Dendritic cell treated with granulocyte-macrophage colony-stimulating factor and Interleukin-4, amounts not matched to agents 40 ng/mL and 50 ng/mL, for 4 days (primary cell): ENCODE measurements at regions of chr1 and their contacts with region 1.

Region 1: GRCh38 chr1:70896224-70896623 is 151.4 kb downstream of the PTGER3 start:
- H3K4me3 Mint-ChIP-seq: no peak overlapping the region
- H3K27ac Mint-ChIP-seq: no peak overlapping the region
- H3K4me1 Mint-ChIP-seq: peaks cover 35% of the 10 kb centered on the region
- H3K27me3 Mint-ChIP-seq: no peaks in the 10 kb centered on the region

Region 2: GRCh38 chr1:70874111-70874510 is 22.1 kb before region 1 on chr1:
- intact Hi-C with region 1: loop called (anchors 2 kb)
- H3K4me3 Mint-ChIP-seq: peak overlapping the region; percentile 42
- H3K27ac Mint-ChIP-seq: peak overlapping the region; percentile 84
- H3K4me1 Mint-ChIP-seq: peaks cover 46% of the 10 kb centered on the region
- H3K27me3 Mint-ChIP-seq: no peaks in the 10 kb centered on the region

Region 3: DNA sequence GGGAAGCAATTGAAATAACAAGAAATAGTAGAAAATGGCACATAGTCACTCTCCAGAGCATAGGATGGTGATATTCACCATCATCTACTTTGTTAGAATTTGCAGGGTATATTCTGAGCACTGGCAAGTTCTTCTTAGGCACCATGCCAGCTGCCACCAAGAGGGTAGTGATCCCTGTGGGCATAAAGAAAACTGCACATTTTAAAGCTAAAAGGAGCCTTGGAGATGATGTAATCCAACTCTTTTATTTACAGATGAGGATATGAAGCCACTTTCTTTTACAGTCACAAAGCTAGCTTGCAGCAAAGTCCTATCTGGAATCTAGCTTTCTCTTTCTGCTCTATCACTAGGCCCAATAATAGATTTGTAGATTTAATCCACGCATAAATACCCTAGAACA is 82.4 kb after region 1 on chr1:
- intact Hi-C with region 1: loop called (anchors 5 kb)
- H3K4me3 Mint-ChIP-seq: no peak overlapping the region
- H3K27ac Mint-ChIP-seq: peak overlapping the region; percentile 92
- H3K4me1 Mint-ChIP-seq: peaks cover 67% of the 10 kb centered on the region
- H3K27me3 Mint-ChIP-seq: no peaks in the 10 kb centered on the region

Region 4: DNA sequence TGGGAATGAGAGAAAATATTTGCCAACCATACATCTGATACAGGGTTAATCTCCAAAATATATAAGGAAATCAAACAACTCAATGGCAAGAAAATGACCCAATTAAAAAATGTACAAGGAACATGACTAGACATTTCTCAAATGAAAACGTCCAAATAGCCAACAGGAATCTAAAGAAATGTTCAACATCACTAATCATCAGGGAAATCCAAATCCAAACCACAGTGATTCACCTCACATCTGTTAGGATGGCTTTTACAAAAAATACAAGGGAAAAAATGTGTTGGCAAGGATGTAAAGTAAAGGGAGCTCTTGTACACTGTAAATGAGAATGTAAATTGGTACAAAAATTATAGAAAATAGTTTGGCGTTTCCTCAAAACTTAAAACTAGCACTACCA is 239.3 kb after region 1 on chr1:
- intact Hi-C with region 1: no loop called
- H3K4me3 Mint-ChIP-seq: no peak overlapping the region
- H3K27ac Mint-ChIP-seq: no peak overlapping the region
- H3K4me1 Mint-ChIP-seq: no peaks in the 10 kb centered on the region
- H3K27me3 Mint-ChIP-seq: no peaks in the 10 kb centered on the region